PC-3 (cell line): ENCODE measurements at regions of chr11 and their contacts with region 1.

Region 1: GRCh38 chr11:6619004-6619745 is at the start of gene TPP1:
- DNase-seq: peak; percentile 93
- ATAC-seq: peak; percentile 90
- H3K4me3 ChIP-seq: peak within 1 kb of the TSS; percentile 79
- H3K27ac ChIP-seq: 0 out of 2 replicates have a peak within 1 kb of the TSS, but pooled peaks have one; percentile 1
- H3K4me1 ChIP-seq: peaks cover 14% of the 10 kb centered on the region
- H3K27me3 ChIP-seq: no peaks in the 10 kb centered on the region
- CTCF ChIP-seq: no peak
- total RNA-seq, gene TPP1: 21.6 and 48.3 TPM in 2 replicates

Region 2: DNA sequence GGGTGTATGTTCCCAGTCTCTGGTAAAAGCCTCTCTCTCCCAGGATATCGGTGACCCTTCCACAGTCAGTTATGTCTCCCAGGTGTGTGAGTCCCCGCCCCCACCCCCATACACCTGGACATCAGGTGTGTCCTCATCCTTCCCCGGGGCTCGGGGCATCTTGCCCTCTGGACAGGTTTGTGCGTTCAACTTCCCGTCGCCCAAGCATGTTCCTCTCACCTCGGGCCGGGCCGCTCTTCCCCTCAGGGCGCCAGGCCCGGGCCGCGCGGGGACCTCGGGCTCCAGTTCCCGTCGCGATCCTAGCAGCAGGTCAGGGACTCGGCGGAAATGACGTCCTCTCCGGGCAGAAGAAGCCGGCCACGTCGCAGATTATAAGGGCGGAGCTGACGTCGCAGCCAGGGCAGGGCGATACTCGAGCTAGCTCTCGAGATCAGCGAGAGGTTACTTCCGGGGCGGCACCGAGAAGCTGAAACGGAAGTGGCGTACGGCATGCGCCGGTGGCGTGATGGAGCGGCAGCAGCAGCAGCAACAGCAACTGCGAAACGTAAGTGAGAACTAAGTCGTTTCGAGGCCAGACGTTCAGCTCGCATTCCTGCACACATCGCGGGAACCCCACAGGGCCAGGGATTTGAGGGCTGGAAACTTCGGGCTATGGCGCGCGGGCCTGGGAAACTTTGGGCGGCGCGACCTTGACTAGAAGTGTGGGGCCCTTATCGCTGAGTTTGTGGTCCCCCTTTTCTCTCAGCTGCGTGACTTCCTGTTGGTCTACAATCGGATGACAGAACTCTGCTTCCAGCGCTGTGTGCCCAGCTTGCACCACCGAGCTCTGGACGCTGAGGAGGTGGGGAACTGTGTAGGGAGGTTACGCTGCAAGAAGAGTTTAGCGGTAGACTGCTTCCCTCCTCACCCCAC is 137.9 kb before region 1 on chr11 and contains the starts of genes ARFIP2 and TIMM10B:
- CTCF ChIA-PET with region 1: no interaction called
- POLR2A ChIA-PET with region 1: no interaction called
- intact Hi-C with region 1: loop called (anchors 1 kb)
- DNase-seq: peak; percentile 97
- ATAC-seq: peak; percentile 95
- H3K4me3 ChIP-seq: peak within 1 kb of the TSS; percentile 95
- H3K27ac ChIP-seq: peak within 1 kb of the TSS; percentile 73
- H3K4me1 ChIP-seq: peaks cover 17% of the 10 kb centered on the region
- H3K27me3 ChIP-seq: no peaks in the 10 kb centered on the region
- CTCF ChIP-seq: no peak
- total RNA-seq, gene ARFIP2: 57.2 and 65.2 TPM in 2 replicates
- total RNA-seq, gene TIMM10B: 25.5 and 26.4 TPM in 2 replicates

Region 3: GRCh38 chr11:6516865-6517264 is 102.3 kb before region 1 on chr11:
- CTCF ChIA-PET with region 1: no interaction called
- POLR2A ChIA-PET with region 1: no interaction called
- intact Hi-C with region 1: no loop called
- DNase-seq: no peak
- ATAC-seq: no peak
- H3K4me3 ChIP-seq: no peak overlapping the region
- H3K27ac ChIP-seq: no peak overlapping the region
- H3K4me1 ChIP-seq: no peaks in the 10 kb centered on the region
- H3K27me3 ChIP-seq: no peaks in the 10 kb centered on the region
- CTCF ChIP-seq: no peak

Region 4: DNA sequence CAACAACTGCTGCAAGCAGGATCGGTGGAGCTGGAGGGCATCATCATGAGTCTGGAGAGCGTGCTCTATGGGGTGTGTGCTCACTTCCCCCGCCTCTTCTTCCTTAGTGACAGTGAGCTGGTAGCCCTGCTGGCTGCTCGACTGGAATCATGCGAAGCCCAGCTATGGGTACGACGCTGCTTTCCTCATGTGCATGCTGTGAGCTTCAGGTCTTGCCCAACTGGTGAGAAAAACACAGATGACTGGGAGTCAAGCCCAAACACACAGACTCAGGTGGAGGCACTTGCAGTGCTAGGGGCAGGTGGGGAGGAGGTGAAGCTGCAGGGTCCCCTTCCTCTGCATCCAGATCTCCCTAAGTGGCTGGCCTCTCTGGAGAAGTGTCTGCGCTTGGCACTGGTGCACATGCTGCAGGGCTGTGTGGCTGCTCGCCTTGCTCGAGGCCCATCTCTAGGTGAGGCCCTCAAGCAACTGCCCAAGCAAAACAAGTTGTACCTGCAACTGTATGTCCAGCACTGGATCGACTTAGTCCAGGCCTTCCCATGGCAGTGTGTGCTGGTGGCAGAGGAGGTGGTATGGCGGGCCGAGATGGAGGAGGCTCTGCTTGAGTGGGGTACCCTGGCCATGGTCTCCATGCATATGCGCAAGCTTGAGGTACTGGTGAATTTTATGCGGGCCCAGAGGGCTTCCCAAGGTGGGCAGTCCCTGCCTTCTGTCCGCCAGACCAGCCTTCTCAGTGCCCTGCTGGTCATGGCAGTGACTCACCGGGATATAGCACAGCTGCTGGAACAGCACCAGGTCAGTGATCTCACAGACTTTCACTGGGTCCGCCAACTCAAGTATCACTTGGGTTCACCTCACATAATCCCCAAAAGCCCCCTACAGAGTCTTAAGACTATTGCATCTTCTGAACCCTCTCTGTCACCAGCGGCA is 74.0 kb before region 1 on chr11:
- CTCF ChIA-PET with region 1: no interaction called
- POLR2A ChIA-PET with region 1: no interaction called
- intact Hi-C with region 1: no loop called
- DNase-seq: no peak
- ATAC-seq: no peak
- H3K4me3 ChIP-seq: no peak overlapping the region
- H3K27ac ChIP-seq: no peak overlapping the region
- H3K4me1 ChIP-seq: no peaks in the 10 kb centered on the region
- H3K27me3 ChIP-seq: no peaks in the 10 kb centered on the region
- CTCF ChIP-seq: no peak